ENCODE measurements at regions of chr3 and their contacts with region 1.

Region 1: GRCh38 chr3:125437631-125438435 is 62.7 kb upstream of the ZNF148 start:
- DNase-seq: peak in 1 of 2 donors; percentile 53
- H3K4me3 ChIP-seq: no peak overlapping the region
- H3K27ac ChIP-seq: no peak overlapping the region
- H3K4me1 ChIP-seq: peaks cover 0 to 13% (median 0%) of the 10 kb centered on the region in 4 donors
- H3K27me3 ChIP-seq: no peaks in the 10 kb centered on the region
- CTCF ChIP-seq: peak; percentile 85 to 92

Region 2: GRCh38 chr3:124812291-124813265 is 625.3 kb before region 1 on chr3:
- intact Hi-C with region 1: no loop called
- DNase-seq: peak; percentile 86 to 93
- H3K4me3 ChIP-seq: peak overlapping the region; percentile 26 to 42
- H3K27ac ChIP-seq: peak overlapping the region; percentile 81 to 89
- H3K4me1 ChIP-seq: peaks cover 0 to 83% (median 68%) of the 10 kb centered on the region in 4 donors
- H3K27me3 ChIP-seq: no peaks in the 10 kb centered on the region
- CTCF ChIP-seq: no peak

Region 3: DNA sequence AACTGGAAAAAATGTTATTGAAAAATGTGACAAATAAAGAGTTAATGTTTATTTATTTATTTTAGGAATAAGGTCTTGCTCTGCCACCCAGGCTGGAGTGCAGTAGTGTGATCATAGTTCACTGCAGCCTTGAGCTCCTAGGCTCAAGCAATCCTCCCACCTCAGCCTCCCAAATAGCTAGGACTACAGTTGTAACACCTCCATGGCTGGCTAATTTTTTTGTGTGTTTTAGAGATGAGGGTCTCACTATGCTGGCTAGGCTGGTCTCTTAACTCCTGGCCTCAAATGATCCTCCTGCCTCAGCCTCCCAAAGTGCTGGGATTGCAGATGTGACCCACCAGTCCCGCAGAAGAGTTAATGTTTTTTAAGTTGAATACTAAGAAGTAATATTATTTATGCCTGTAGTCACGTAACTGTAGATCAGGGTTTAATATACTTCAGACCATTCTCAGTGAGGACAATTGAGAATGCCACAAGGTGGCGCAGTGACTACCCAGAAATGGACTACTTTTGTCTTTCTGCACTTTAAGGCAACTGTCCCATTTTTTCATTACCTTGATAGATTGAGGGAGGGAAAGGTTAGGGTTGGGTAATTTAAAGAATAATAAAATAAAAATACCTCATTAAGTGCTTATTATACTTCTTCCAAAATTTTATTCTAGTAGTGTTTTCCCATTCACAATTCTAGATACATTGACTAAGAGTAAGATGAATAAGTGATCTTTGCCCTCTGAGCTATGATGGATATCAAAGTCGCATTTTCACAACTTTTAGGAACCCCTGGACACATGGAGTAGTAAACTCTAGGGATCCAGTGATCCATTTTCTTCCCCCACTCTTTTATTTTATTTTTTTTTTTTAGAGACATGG is 509.3 kb before region 1 on chr3:
- intact Hi-C with region 1: loop called (anchors 5 kb)
- DNase-seq: peak; percentile 70 to 84
- H3K4me3 ChIP-seq: no peak overlapping the region
- H3K27ac ChIP-seq: no peak overlapping the region
- H3K4me1 ChIP-seq: no peaks in the 10 kb centered on the region
- H3K27me3 ChIP-seq: no peaks in the 10 kb centered on the region
- CTCF ChIP-seq: peak; percentile 65

Region 4: GRCh38 chr3:126156477-126156876 is 718.6 kb after region 1 on chr3:
- intact Hi-C with region 1: no loop called
- DNase-seq: no peak
- H3K4me3 ChIP-seq: no peak overlapping the region
- H3K27ac ChIP-seq: no peak overlapping the region
- H3K4me1 ChIP-seq: no peaks in the 10 kb centered on the region
- H3K27me3 ChIP-seq: no peaks in the 10 kb centered on the region
- CTCF ChIP-seq: no peak